ENCODE measurements at regions of chr19 and their contacts with region 1.

Region 1: DNA sequence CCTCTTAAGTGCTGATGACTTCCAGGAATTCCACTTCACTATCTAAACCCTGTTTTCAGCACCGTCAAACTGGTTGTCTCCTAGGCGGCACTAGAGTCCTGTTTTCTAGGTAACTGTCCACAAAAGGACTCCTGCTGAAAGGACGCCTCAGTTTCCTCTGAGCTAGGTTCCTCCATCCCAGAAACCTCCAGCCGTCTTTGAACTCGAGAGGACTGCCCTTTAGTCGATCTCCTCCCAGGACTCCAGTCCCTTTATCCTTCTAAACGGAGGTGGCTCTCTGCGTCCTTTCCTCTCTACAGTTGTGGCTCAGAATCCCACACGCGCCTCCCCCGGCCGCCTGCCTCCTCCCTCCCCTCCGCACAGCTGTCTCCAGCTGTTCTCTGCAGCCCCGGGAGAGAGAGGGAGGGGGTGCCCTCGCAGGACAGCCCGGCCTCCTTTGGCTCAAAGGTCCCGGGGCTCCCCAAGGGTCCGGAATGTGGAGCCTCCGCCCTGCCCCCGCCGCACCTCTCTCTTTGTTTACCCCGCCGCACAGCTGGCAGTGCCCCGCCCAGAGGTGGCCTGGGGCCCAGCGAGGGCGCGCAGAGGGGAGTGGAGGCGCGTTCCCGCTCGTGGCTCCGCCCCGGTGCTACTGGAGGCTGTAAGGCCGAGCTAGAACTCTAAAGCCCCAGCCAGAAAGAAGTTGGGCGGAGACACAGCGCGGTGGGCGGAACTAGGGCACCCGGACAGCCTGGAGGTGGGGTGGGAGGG is 2.4 kb downstream of the LTBP4 start:
- DNase-seq: peak; percentile 97
- H3K4me3 Mint-ChIP-seq: peak overlapping the region; percentile 86
- H3K27ac Mint-ChIP-seq: peak overlapping the region; percentile 87
- H3K4me1 Mint-ChIP-seq: peaks cover 58% of the 10 kb centered on the region
- H3K27me3 Mint-ChIP-seq: peaks cover 26% of the 10 kb centered on the region

Region 2: DNA sequence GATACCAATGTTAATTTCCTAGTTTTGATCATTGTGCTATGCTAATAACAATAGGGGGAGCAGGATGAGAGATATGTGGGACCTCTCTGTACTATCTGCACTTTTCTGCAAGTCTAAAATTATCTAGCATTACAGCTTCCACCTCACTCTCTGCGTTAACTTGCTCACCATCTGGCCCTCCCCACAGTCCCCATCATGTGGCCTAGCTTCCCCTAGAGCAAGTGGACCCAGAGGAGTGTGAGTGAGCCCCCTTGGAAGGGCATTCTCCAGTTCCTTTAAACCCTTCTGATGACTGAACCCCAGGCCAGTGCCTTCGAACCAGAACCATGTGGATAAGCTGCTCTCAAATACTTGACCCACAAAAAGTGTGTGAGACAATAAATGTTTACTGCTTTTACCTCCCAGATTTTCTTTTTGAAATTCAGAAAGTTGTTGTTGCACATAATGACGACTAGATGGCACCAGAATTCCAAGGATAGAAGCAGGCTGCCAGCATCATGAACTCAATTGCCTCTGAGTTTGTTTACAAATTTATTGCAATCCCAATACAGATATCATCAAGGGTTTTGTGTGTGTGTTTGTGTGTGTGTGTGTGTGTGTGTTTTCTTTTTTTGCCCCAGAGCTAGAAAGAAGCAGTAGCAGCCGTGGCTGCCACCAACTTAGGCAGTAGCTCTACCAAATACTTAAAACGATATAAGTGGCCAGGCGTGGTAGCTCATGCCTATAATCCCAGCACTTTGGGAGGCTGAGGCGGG is 463.9 kb before region 1 on chr19:
- intact Hi-C with region 1: loop called (anchors 10 kb)
- DNase-seq: no peak
- H3K4me3 Mint-ChIP-seq: no peak overlapping the region
- H3K27ac Mint-ChIP-seq: no peak overlapping the region
- H3K4me1 Mint-ChIP-seq: peaks cover 16% of the 10 kb centered on the region
- H3K27me3 Mint-ChIP-seq: peaks cover 2% of the 10 kb centered on the region

Region 3: GRCh38 chr19:40425450-40426287 is 177.9 kb before region 1 on chr19 and contains the start of gene SERTAD1:
- intact Hi-C with region 1: loop called (anchors 2 kb)
- DNase-seq: peak; percentile 100
- H3K4me3 Mint-ChIP-seq: peak within 1 kb of the TSS; percentile 93
- H3K27ac Mint-ChIP-seq: peak within 1 kb of the TSS; percentile 99
- H3K4me1 Mint-ChIP-seq: peaks cover 7% of the 10 kb centered on the region
- H3K27me3 Mint-ChIP-seq: peaks cover 2% of the 10 kb centered on the region
- total RNA-seq, gene SERTAD1: 18.3 and 19.4 TPM in 2 replicates

Region 4: GRCh38 chr19:40465557-40466150 is 137.9 kb before region 1 on chr19 and contains the start of gene BLVRB:
- intact Hi-C with region 1: loop called (anchors 1 kb)
- DNase-seq: peak; percentile 99
- H3K4me3 Mint-ChIP-seq: peak within 1 kb of the TSS; percentile 77
- H3K27ac Mint-ChIP-seq: peak within 1 kb of the TSS; percentile 92
- H3K4me1 Mint-ChIP-seq: peaks cover 28% of the 10 kb centered on the region
- H3K27me3 Mint-ChIP-seq: peaks cover 27% of the 10 kb centered on the region
- total RNA-seq, gene BLVRB: 6.1 and 8.2 TPM in 2 replicates

Region 5: GRCh38 chr19:40570313-40571004 is 33.1 kb before region 1 on chr19:
- intact Hi-C with region 1: loop called (anchors 1 kb)
- DNase-seq: peak; percentile 97
- H3K4me3 Mint-ChIP-seq: peak overlapping the region; percentile 65
- H3K27ac Mint-ChIP-seq: peak overlapping the region; percentile 72
- H3K4me1 Mint-ChIP-seq: peaks cover 14% of the 10 kb centered on the region
- H3K27me3 Mint-ChIP-seq: peaks cover 38% of the 10 kb centered on the region

Region 6: GRCh38 chr19:40633207-40633606 is 29.6 kb after region 1 on chr19:
- intact Hi-C with region 1: loop called (anchors 1 kb)
- DNase-seq: no peak
- H3K4me3 Mint-ChIP-seq: no peak overlapping the region
- H3K27ac Mint-ChIP-seq: no peak overlapping the region
- H3K4me1 Mint-ChIP-seq: peaks cover 11% of the 10 kb centered on the region
- H3K27me3 Mint-ChIP-seq: peaks cover 13% of the 10 kb centered on the region

Region 7: GRCh38 chr19:40662921-40663694 is 59.5 kb after region 1 on chr19:
- intact Hi-C with region 1: no loop called
- DNase-seq: peak; percentile 87
- H3K4me3 Mint-ChIP-seq: peak overlapping the region; percentile 80
- H3K27ac Mint-ChIP-seq: peak overlapping the region; percentile 86
- H3K4me1 Mint-ChIP-seq: peaks cover 20% of the 10 kb centered on the region
- H3K27me3 Mint-ChIP-seq: peaks cover 2% of the 10 kb centered on the region